Activated CD4-positive, alpha-beta memory T cell treated with anti-CD3 and anti-CD28 coated beads for 36 hours (primary cell): ENCODE measurements at regions of chr12 and their contacts with region 1.

Region 1: DNA sequence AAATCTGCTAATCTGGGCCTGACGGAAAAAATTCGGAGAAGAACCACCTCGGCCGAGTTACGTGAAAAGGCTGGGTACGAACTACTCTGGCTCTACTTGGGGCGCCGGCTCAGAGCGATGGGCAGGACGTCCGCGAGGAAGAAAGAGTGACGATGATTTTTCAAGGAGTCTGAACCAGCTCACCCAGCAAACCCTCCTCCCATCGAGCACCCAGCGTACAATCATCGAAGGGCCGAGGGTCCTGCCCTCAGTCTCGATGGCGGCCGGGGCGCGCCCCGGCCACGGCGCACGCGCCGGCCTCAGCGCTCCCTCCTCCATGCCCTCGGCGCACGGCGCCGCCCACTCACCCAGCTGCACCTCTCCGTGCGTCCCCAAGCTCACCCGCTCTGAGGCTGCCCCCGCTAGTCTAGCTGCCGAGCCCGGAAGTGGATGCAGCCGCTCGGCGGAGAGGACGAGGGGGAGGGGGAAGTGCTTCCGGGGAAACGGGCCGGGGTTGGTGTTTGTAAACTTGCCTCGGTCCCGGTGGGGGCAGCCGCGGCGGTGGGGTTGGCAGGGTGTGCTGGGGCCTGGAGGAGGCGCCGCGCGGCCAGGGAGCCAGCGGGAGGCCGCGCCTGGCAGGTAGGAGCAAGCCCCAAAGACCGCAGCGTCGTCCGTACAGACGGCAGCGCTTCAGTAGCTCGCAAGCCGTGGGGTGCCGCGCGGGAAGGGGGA is at the starts of genes CSAD and ZNF740:
- DNase-seq: peak; percentile 99
- H3K4me3 Mint-ChIP-seq: peak within 1 kb of the TSS; percentile 96
- H3K27ac Mint-ChIP-seq: peak within 1 kb of the TSS; percentile 94
- H3K4me1 Mint-ChIP-seq: peaks cover 47% of the 10 kb centered on the region
- H3K27me3 Mint-ChIP-seq: no peaks in the 10 kb centered on the region
- total RNA-seq, gene CSAD: 21.4 to 23.7 TPM
- total RNA-seq, gene ZNF740: 32.6 to 37.5 TPM

Region 2: DNA sequence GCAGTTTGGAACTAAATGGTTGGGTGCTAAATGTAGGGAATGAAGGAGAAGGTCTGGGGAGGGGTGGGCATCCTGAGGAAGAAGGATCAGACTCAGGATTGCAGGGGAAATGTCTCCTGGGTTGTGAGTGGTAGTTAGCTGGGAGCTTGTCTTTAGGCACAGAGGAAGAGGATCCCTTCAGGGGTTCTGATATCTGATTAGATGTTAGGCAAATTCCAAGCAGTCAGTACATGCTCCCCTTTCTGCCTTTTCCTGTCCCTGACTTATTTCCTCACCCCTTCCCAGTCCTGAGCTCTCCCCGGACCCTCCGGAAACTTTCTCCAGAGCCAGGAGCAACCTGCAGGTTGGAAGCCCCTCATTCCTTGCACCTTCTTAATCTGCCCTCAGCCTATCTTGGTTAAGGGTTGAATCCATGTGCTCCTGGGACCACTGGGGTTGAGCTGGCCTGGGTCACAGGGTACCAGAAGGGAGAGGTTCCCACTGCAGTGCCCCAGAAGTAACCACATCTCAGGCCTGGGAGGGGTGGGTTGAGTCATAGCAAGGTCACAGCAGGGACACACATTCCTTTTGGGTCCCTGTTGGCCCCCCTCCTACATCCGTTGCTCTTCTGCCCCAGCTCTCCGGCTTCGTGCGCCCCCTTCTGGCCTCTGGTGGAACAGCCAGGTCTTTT is 81.3 kb before region 1 on chr12:
- CTCF ChIA-PET with region 1: interaction called, 4 read pairs
- POLR2A ChIA-PET with region 1: interaction called, 5 read pairs
- intact Hi-C with region 1: loop called (anchors 5 kb)
- DNase-seq: peak; percentile 95
- H3K4me3 Mint-ChIP-seq: peak overlapping the region; percentile 13
- H3K27ac Mint-ChIP-seq: peak overlapping the region; percentile 56
- H3K4me1 Mint-ChIP-seq: peaks cover 41% of the 10 kb centered on the region
- H3K27me3 Mint-ChIP-seq: peaks cover 5% of the 10 kb centered on the region

Region 3: DNA sequence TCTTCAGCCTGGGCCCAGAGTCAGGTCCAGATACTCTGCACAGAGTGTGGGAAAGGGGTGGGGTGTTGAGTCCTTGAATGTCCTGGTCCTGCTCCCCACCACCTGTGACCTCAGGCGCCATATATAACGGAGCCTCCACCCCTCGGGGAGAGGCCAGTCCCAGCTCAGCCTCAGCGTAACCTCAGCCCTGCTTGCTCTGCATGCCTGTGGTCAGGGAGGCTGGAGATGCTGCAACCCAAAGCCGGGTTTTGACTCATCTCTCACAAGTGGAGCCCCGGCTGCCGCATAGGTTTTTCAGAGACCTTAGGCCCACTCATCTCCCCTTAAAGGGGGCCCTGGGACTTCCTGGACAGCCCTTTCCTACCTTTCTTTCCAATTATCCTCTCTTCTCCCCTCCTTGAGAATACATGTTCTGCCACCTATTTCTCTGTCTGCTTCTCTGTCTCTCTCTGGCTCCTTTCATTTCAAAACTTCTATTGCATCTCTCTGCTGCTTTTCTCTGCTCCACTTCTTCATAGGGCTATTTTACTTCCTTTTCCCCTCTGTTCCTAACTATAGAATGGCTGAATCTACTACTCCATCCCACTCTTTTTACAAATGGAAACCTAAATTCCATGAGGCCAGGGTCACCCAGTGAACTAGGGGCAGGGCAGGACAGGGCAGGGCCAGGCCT is 25.5 kb after region 1 on chr12:
- CTCF ChIA-PET with region 1: interaction called, 12 read pairs
- POLR2A ChIA-PET with region 1: interaction called, 6 read pairs
- intact Hi-C with region 1: no loop called
- DNase-seq: peak; percentile 92
- H3K4me3 Mint-ChIP-seq: peak overlapping the region; percentile 84
- H3K27ac Mint-ChIP-seq: peak overlapping the region; percentile 83
- H3K4me1 Mint-ChIP-seq: peaks cover 77% of the 10 kb centered on the region
- H3K27me3 Mint-ChIP-seq: no peaks in the 10 kb centered on the region

Region 4: DNA sequence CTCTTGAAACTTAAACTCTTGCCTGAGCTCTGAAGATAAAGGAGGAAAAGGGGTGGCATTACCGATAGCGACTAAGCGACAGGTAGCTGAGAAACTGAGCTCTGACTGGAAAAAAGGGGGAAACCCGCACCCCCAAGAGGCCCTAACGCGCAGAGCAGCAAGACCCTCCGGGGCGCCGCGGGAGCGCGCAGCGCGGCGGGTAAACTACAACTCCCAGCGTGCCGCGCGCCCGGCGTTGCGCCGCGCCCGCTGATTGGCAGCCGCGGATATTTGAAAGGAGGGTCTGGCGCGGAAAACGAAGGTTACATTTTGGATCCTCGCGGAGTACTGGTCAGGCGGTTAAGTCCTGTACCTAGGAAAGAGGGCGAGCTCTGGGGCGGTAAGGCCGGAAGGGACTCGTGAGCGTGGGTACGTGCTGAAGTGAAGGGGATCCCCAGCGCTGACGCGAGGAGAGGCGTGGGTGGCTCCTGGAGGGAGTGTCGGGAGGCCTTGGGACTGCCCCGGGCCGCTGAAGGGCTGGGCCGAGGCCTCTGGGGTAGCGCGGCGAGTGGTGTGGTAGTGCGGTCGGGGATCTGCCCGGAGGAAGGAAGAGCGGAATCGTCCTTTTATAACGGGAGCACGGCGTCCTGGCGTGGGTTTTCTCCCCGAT is 87.7 kb after region 1 on chr12 and contains the start of gene ESPL1:
- CTCF ChIA-PET with region 1: interaction called, 12 read pairs
- POLR2A ChIA-PET with region 1: interaction called, 13 read pairs
- intact Hi-C with region 1: loop called (anchors 1 kb)
- DNase-seq: peak; percentile 93
- H3K4me3 Mint-ChIP-seq: peak within 1 kb of the TSS; percentile 97
- H3K27ac Mint-ChIP-seq: peak within 1 kb of the TSS; percentile 95
- H3K4me1 Mint-ChIP-seq: peaks cover 36% of the 10 kb centered on the region
- H3K27me3 Mint-ChIP-seq: no peaks in the 10 kb centered on the region
- total RNA-seq, gene ESPL1: 70.0 to 77.2 TPM

Region 5: DNA sequence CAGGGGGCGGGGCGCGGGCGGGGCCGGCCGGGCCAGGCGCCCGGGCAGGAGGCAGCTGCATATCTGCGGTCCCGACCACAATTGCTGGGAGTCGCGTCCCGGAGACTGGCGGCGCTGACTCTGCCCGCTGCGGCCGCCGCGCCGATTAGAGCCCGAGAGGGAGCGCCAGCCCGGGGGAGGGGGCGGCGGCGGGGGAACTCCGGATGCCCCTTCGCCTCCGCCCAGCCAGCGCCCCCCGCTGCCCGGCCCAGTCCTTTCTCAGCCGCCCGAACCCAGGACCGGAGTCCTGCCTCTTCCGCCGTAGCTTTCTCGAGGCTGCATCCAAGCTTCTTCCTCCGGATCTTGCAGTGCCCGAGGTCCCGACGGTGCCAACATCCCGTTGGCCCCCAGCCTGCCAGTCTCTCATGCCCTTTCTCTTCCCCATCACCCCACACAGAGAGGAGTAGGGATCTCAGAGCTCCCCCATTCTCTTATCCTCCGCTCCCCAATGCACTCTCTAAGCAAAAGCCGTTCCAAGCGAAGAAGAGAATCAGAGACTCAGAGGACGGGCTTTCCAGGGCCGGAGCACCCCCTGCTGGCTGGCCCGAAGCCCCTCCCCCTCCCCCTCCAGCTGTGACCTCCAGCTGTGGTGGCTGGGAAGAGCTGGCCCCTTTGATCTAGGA is 164.6 kb after region 1 on chr12:
- CTCF ChIA-PET with region 1: interaction called, 11 read pairs
- POLR2A ChIA-PET with region 1: no interaction called
- intact Hi-C with region 1: no loop called
- DNase-seq: peak; percentile 86
- H3K4me3 Mint-ChIP-seq: peak overlapping the region; percentile 92
- H3K27ac Mint-ChIP-seq: peak overlapping the region; percentile 56
- H3K4me1 Mint-ChIP-seq: peaks cover 14% of the 10 kb centered on the region
- H3K27me3 Mint-ChIP-seq: no peaks in the 10 kb centered on the region

Region 6: DNA sequence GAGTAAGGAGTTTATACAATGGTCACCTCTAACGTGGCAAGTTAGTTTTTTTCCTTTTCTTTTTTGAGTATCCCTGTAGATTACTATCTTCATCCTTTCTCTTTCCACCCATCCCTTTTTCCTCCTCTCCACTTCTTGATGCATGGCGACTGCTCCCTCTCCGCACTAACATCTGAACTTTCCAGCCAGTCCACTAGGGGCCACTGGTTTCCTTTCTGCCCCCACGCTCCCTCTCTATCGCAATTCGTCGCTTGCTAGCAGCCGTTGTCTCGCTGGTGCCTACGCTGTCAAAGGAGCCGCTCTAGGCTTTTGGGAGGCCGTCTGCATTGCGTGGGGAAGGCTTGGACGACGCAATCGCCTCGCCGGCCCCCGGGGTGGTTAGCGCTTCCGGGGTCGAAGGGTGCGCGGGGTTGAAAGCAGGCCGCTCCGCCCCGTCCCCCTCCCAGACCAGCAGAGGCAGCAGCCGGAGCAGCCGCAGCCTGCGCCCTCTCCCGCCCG is 271.3 kb after region 1 on chr12 and contains the start of gene PCBP2:
- CTCF ChIA-PET with region 1: no interaction called
- POLR2A ChIA-PET with region 1: no interaction called
- intact Hi-C with region 1: loop called (anchors 1 kb)
- DNase-seq: peak; percentile 99
- H3K4me3 Mint-ChIP-seq: peak within 1 kb of the TSS; percentile 94
- H3K27ac Mint-ChIP-seq: peak within 1 kb of the TSS; percentile 98
- H3K4me1 Mint-ChIP-seq: peaks cover 23% of the 10 kb centered on the region
- H3K27me3 Mint-ChIP-seq: no peaks in the 10 kb centered on the region
- total RNA-seq, gene PCBP2: 897 to 926 TPM

Region 7: DNA sequence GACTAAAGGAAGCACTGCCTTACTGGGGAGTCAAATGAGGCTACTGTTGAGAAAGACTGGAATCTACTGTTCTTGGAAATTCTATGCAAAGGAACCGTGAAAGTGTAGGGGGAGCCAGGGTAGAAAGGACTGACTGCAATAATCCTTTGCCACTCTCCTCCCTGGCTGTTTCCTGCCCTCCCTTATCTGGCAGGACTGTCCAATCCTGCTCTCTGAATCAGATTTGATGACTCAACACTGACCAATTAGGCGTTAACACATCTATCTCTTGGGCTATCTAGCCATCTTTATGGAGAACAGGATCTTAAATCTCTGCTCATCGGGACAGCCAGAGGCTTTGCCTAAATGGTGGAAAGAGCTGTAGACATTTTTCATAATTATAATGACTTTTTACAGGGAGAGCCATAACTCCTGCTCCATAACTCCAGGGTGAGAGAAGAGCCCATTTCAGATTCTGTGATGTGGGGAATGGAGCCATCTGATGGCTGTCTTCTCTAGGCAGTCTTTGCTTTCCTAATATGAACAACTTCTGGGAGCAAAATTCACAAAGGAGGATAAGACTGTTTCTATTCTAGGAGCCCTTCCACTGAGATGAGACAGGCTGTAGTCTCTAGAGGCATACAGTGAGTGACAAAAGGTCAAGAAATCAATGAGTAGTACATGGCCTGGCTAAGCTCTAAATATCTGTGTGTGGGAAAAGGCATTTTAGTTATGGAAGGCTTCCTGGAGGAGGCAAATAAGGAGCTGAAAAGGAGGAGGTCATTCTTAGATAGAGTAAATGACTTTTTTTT is 640.3 kb after region 1 on chr12:
- CTCF ChIA-PET with region 1: no interaction called
- POLR2A ChIA-PET with region 1: no interaction called
- intact Hi-C with region 1: no loop called
- DNase-seq: no peak
- H3K4me3 Mint-ChIP-seq: no peak overlapping the region
- H3K27ac Mint-ChIP-seq: no peak overlapping the region
- H3K4me1 Mint-ChIP-seq: no peaks in the 10 kb centered on the region
- H3K27me3 Mint-ChIP-seq: peaks cover 50% of the 10 kb centered on the region